Activated CD4-positive, alpha-beta T cell treated with anti-CD3 and anti-CD28 coated beads, Interleukin-2, amount 10 ng/mL, durations not matched to agents 24 days and 14 days (primary cell): ENCODE measurements at regions of chr1 and their contacts with region 1.

Region 1: DNA sequence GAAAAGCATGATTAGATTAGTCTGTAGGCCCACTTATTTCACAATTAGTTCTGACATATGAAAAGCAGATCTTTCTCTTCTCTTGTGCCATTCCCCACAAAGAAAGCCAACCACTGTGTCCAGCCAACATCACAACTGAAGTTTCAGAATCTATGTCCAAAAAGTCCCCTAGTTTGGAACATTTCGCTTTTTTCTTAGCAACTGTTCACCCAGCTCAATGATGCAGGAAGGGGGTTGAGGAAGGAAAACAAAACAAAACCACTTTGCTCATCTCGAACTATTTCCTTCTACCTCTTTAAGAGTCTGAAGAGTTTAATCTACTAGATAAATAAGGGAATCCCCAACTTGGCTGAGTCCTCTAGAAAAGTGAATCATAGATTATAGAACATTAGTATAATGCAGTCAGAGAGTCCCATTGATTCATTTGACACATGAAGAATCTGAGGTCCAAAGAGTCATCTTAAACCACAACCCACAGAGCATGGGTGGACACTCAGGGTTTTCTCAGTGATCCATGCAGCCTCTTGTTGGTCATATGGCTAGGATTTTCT is 159.3 kb upstream of the SGIP1 start:
- DNase-seq: peak; percentile 76
- H3K4me3 Mint-ChIP-seq: peak overlapping the region; percentile 82
- H3K27ac Mint-ChIP-seq: peak overlapping the region; percentile 94
- H3K4me1 Mint-ChIP-seq: peaks cover 59% of the 10 kb centered on the region
- H3K27me3 Mint-ChIP-seq: no peaks in the 10 kb centered on the region

Region 2: DNA sequence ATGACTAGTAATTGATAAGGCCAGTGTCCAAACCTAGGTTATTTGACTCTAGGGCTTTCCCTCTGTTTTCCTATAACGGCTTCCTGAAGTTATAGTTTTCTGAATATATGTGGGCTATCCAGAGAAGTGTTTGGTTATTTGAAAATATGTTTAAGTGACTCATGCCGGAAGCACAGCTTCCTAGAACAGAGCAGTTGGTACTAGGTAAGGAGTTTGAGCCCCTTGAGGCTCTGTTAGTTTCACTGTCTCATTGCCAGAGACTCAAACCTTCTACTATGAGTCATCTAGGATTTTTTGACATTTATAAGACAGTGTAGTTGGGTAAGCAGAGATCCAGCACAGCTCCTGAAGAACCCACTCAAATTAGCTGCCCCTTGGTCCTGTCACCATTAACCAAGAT is 981.3 kb before region 1 on chr1:
- intact Hi-C with region 1: loop called (anchors 5 kb)
- DNase-seq: peak; percentile 81
- H3K4me3 Mint-ChIP-seq: peak overlapping the region; percentile 38
- H3K27ac Mint-ChIP-seq: peak overlapping the region; percentile 54
- H3K4me1 Mint-ChIP-seq: peaks cover 72% of the 10 kb centered on the region
- H3K27me3 Mint-ChIP-seq: no peaks in the 10 kb centered on the region

Region 3: DNA sequence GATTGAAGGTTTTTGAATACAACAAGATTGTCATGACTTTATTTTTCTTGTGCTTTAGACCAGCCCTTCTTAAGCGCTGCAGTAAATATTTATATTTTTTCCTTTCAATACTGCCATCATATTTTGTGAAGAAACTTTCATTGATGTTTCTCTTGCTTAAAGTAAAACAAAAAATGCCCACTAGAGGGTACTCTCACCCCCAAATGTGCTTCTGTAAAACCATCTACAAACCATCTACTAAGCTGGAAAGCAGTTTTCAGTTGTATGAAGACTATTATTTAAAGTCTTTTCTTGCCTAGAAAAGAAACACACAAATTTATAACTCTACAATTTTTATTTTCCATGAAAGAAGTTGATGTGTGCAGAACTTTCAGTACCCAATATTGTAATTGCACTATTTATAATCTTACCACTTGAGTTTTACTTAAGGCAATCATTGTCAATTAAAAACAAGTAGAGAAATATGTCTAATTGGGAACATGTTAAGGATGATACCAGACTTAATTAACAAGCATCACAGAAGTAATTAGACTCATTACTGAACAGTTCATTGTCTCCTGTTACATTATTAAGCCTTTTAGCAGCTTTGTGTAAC is 943.4 kb before region 1 on chr1:
- intact Hi-C with region 1: no loop called
- DNase-seq: peak; percentile 64
- H3K4me3 Mint-ChIP-seq: no peak overlapping the region
- H3K27ac Mint-ChIP-seq: no peak overlapping the region
- H3K4me1 Mint-ChIP-seq: peaks cover 14% of the 10 kb centered on the region
- H3K27me3 Mint-ChIP-seq: no peaks in the 10 kb centered on the region

Region 4: DNA sequence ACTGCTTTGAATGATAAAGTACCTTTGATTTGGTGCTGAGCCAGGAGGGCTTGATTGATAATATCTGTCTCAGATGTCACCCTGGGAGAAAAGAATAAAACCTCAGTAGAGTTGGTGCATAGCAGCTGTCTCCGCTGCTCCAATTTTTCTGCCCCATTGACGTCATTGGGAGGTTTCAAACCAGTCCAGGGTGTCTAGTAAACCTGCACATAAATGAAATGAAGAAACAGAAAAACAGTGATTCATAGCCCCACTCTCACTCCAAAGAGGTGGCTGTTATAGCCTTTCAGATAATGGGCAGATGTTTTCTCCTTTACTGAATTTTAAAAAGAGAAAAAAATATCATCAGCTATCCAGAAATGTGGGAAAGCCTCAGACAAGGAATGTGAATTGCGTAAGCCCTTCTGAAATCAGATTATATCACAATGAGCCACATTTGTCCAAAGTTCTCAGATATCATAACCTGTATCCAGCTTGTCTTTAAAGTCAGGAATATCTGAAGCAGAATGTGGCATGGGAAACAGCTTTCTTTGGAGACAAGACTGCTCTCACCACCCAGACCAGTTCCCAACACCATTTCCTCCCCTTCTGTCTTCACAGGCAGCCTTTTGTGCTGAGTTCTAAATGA is 192.0 kb before region 1 on chr1:
- intact Hi-C with region 1: loop called (anchors 2 kb)
- DNase-seq: peak; percentile 84
- H3K4me3 Mint-ChIP-seq: peak overlapping the region; percentile 52
- H3K27ac Mint-ChIP-seq: peak overlapping the region; percentile 52
- H3K4me1 Mint-ChIP-seq: peaks cover 29% of the 10 kb centered on the region
- H3K27me3 Mint-ChIP-seq: peaks cover 1% of the 10 kb centered on the region

Region 5: DNA sequence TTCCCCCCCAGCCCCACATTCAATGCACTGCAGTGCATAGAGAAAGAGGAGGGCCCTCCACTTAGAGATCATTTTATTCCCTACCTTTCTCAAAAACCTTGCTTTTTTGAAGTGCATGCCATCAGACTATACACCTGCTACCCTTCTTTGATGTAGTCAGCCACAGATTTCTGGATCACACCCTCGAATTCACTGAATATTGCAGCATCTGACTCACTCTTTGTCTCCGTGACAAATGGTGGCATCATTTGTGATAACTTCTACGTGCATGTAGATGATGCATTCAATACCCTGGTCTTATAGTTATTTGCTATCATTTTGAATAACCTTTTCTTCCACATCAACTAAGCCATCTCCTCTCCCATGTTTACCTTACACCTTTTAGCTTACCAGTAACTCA is 151.0 kb before region 1 on chr1:
- intact Hi-C with region 1: no loop called
- DNase-seq: no peak
- H3K4me3 Mint-ChIP-seq: no peak overlapping the region
- H3K27ac Mint-ChIP-seq: no peak overlapping the region
- H3K4me1 Mint-ChIP-seq: no peaks in the 10 kb centered on the region
- H3K27me3 Mint-ChIP-seq: peaks cover 13% of the 10 kb centered on the region

Region 6: GRCh38 chr1:66271216-66271903 is 103.3 kb before region 1 on chr1:
- intact Hi-C with region 1: no loop called
- DNase-seq: peak; percentile 81
- H3K4me3 Mint-ChIP-seq: peak overlapping the region; percentile 67
- H3K27ac Mint-ChIP-seq: peak overlapping the region; percentile 88
- H3K4me1 Mint-ChIP-seq: peaks cover 62% of the 10 kb centered on the region
- H3K27me3 Mint-ChIP-seq: no peaks in the 10 kb centered on the region

Region 7: GRCh38 chr1:66282343-66282852 is 92.2 kb before region 1 on chr1:
- intact Hi-C with region 1: loop called (anchors 1 kb)
- DNase-seq: peak; percentile 92
- H3K4me3 Mint-ChIP-seq: peak overlapping the region; percentile 32
- H3K27ac Mint-ChIP-seq: peak overlapping the region; percentile 74
- H3K4me1 Mint-ChIP-seq: peaks cover 69% of the 10 kb centered on the region
- H3K27me3 Mint-ChIP-seq: no peaks in the 10 kb centered on the region

Region 8: DNA sequence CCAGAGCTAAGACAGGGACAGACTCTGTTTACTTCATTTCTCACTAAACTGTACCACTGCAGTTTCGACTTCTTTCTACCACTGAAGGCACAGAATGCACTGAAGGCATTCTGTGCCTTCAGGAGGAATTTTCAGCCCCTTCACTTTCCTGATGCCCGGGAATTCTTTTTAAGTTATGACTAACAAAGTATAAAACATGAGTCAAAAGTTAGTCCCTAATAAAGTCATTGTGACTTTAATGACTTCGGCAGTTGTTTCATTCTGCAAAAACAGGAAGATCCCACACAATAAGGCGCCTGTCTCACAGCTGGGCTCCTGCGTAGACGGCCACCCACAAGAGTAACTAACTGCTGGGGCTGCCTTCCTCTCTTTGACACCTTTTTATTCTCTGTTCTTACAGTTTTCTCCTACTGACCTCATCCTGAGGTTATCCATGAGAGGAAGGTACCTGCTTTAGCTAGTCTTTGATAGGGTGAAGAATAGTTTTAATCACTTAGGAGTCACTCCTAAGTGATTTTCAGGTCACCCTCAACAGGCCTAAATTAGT is 24.6 kb before region 1 on chr1:
- intact Hi-C with region 1: loop called (anchors 1 kb)
- DNase-seq: peak; percentile 82
- H3K4me3 Mint-ChIP-seq: peak overlapping the region; percentile 80
- H3K27ac Mint-ChIP-seq: peak overlapping the region; percentile 90
- H3K4me1 Mint-ChIP-seq: peaks cover 72% of the 10 kb centered on the region
- H3K27me3 Mint-ChIP-seq: no peaks in the 10 kb centered on the region

Region 9: DNA sequence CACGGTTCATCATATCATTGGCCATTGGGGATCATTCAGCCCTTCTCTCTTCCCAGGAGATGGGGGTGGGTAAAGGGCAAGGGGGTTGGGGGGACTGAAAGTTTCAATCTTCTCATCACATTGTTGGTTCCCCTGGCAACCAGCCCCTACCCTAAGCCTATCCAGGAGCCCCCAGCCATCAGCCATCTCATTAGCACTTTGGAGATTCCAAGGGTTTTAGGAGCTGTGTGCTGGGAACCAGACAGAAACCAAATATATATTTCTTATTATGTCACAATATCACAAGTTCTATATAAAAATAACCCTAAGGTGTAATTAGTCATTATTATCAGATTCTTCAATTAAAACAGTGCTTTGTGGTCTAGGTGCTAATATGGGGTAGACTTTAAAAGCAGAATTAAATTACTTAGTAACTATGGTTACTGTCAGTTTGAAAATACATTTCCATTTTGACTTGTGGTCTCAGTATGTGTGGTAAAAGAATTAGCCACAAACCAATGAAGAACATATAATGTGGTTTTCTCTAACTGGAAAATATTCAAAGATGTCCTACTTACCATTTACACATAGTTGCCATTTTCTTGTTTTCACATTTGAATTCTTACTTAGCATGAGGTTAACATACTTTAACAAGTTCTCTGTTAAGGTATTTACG is 819.7 kb after region 1 on chr1:
- intact Hi-C with region 1: loop called (anchors 10 kb)
- DNase-seq: peak; percentile 66
- H3K4me3 Mint-ChIP-seq: no peak overlapping the region
- H3K27ac Mint-ChIP-seq: peak overlapping the region; percentile 86
- H3K4me1 Mint-ChIP-seq: peaks cover 8% of the 10 kb centered on the region
- H3K27me3 Mint-ChIP-seq: no peaks in the 10 kb centered on the region